Right ventricle myocardium superior (tissue), 1 donor: ENCODE measurements at regions of chr10 and their contacts with region 1.

Region 1: DNA sequence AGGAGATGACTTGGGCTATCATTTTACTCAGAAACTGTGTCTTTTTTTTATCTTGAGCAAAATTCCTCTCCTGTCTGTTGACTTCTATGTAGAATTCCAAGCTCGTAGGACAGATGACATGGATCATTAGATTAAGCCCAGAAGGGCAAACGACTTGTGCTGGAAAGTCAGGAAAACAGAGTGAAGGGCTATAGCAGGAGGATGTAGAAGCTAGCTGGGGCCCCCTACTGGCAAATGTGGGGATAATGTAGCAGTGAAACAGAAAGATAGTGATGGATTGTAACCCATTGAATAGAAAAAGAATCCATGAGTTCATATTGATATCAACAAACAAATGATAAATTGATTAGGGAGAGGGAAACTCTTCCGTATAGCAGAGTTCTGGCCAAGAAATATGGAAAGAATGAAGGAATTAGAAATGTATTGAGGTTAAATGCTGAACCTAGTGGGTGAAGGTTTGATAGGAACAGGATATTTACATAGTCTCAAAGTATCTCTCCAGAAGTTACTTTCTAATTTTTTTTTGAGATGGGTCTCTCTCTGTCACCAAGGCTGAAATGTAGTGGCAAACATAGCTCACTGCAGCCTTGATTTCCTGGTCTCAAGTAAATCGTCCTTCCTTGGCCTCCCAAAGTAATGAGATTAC is 103.6 kb downstream of the LYZL1 start:
- DNase-seq: no peak
- ATAC-seq: peak; percentile 53

Region 2: DNA sequence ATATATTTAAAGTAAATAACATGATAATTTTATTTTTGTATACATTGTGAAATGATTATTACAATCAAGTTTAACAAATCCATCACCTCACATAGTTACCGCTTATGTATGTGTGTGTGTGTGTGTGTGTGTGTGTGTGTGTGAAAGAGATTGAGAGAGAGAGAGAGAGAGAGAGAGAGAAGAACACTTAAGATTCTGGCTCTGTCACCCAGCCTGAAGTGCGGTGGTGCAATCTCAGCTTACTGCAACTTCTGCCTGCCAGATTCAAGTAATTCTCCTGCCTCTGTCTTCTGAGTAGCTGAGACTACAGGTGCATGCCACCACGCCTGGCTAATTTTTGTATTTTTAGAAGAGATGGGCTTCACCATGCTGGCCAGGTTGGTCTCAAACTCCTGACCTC is 85.8 kb before region 1 on chr10:
- intact Hi-C with region 1: no loop called
- DNase-seq: no peak
- ATAC-seq: no peak

Region 3: DNA sequence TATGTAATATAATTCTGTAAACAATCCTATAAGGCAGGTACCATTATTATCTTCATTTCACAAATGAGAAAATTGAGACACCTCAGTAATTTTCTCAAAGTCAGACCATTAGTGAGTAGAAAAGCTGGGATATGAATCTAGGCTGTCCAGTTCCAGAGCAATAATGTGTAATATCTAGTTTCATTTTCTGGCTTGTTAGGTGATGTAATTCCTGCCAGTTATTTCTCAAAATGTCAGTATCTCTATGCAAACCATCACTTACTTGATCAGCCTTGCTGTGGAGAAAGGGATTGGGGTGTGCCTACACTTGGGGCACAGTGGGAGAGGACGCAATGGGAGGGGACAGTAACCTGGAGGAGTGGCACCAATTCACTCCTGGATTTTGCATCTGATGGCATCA is 53.8 kb after region 1 on chr10:
- intact Hi-C with region 1: loop called (anchors 5 kb)
- DNase-seq: no peak
- ATAC-seq: no peak

Region 4: DNA sequence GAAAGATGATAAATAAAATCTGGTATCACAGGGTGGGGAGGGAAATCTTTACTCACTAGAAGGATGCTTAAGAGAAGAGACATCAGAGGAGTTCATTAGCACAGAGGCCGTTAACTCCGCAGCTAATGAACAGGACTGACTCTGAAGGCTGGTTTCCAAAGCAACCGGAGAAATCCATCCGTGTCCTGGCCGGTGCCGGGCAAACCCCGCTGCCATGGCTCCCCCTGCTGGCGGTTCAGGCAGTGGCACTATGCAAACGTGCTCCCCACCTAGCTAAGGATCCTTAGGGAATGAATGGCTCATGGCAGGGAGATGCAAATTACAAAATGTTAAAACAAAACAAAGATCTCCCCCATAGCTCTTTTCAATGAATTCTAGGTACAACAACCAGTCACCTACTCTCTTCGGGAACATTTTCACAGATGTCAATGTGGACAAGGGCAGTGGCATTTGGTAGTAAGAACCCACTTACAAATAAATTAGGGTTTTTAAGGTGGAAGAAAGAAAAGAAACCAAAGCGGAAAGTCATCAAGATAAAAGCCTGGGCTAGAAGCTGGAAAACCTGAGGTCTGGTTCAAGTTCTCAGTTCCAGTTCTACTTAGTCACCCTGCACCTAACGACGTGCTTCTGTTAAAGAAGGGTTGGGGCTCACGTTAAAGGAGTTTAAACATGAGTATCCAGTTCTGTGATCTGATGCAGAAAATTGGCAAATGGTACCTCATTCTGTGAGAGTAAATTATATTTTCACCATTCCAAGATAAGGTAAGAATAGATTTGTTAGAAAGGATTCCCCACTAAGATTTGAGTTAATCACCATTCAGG is 104.1 kb after region 1 on chr10:
- intact Hi-C with region 1: loop called (anchors 10 kb)
- DNase-seq: peak; percentile 80
- ATAC-seq: peak; percentile 82